ENCODE measurements at regions of chr14 and their contacts with region 1.

Region 1: DNA sequence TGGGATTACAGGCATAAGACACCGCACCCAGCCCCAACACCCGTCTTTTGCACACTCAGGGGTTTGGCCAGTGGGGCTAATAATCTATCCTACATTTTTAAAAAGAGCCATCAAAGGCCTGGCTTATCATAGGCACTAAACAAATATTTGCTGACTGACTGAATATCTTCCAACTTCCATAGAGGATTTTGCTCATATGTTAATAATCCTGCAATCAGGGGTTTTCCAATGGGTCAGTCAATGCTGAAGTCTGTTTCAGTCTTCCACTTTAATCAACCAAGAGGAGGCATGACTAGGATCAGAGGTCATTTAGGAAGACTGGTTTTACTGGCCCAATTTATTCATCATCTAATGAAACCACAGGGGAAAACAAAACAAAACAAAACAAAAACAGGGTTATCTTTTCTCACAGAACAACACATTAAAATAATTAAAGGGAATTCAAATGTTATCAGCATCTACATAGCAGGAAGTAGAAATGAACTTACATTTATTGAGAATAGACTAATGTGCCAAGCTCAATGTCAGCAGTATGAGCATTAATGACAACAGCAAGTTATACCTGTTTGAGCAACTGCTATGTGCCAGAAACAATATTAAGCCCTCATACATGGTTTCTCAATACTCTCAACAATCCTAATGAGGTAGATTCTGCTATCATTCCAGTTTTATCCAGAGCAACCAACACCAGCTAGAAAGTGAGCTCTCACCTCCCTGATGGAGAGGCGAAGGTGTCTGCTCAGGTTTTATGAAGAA is 372.2 kb downstream of the EGLN3 start:
- DNase-seq: no peak
- ATAC-seq: no peak
- H3K4me3 ChIP-seq: no peak overlapping the region
- H3K27ac ChIP-seq: no peak overlapping the region
- H3K4me1 ChIP-seq: no peaks in the 10 kb centered on the region
- H3K27me3 ChIP-seq: no peaks in the 10 kb centered on the region
- CTCF ChIP-seq: no peak
- EP300 ChIP-seq: no peak
- POLR2A ChIP-seq: no peak
- RAD21 ChIP-seq: no peak

Region 2: GRCh38 chr14:33516898-33517436 is 61.7 kb before region 1 on chr14:
- CTCF ChIA-PET with region 1: interaction called, 18 read pairs
- POLR2A ChIA-PET with region 1: no interaction called
- RAD21 ChIA-PET with region 1: interaction called, 83 read pairs
- SMC1A ChIA-PET with region 1: interaction called, 32 read pairs
- in situ Hi-C with region 1: no loop called
- intact Hi-C with region 1: no loop called
- DNase-seq: no peak
- ATAC-seq: peak; percentile 16; the same call in 1 of the 3 replicates
- H3K4me3 ChIP-seq: no peak overlapping the region
- H3K27ac ChIP-seq: no peak overlapping the region
- H3K4me1 ChIP-seq: no peaks in the 10 kb centered on the region
- H3K27me3 ChIP-seq: peaks cover 0 to 2% of the 10 kb centered on the region in 2 experiments; a peak in 2 of 4 replicates
- CTCF ChIP-seq: no peak
- EP300 ChIP-seq: no peak
- POLR2A ChIP-seq: no peak
- RAD21 ChIP-seq: no peak

Region 3: GRCh38 chr14:33564774-33565630 is 13.6 kb before region 1 on chr14:
- CTCF ChIA-PET with region 1: interaction called, 39 read pairs
- POLR2A ChIA-PET with region 1: interaction called, 48 read pairs
- RAD21 ChIA-PET with region 1: interaction called, 90 read pairs
- SMC1A ChIA-PET with region 1: interaction called, 98 read pairs
- in situ Hi-C with region 1: no loop called
- intact Hi-C with region 1: no loop called
- DNase-seq: peak; percentile 57
- ATAC-seq: peak; percentile 92
- H3K4me3 ChIP-seq: no peak overlapping the region
- H3K27ac ChIP-seq: no peak overlapping the region
- H3K4me1 ChIP-seq: no peaks in the 10 kb centered on the region
- H3K27me3 ChIP-seq: peaks cover 0 to 3% of the 10 kb centered on the region in 2 experiments; a peak in 1 of 4 replicates
- CTCF ChIP-seq: no peak
- EP300 ChIP-seq: peak in 1 of 2 experiments; percentile 70; a peak in 1 of 4 replicates
- POLR2A ChIP-seq: no peak
- RAD21 ChIP-seq: no peak

Region 4: GRCh38 chr14:33596211-33597080 is 17.8 kb after region 1 on chr14:
- CTCF ChIA-PET with region 1: interaction called, 12 read pairs
- POLR2A ChIA-PET with region 1: interaction called, 15 read pairs
- RAD21 ChIA-PET with region 1: interaction called, 44 read pairs
- SMC1A ChIA-PET with region 1: interaction called, 103 read pairs
- in situ Hi-C with region 1: no loop called
- intact Hi-C with region 1: no loop called
- DNase-seq: no peak
- ATAC-seq: no peak
- H3K4me3 ChIP-seq: no peak overlapping the region
- H3K27ac ChIP-seq: no peak overlapping the region
- H3K4me1 ChIP-seq: no peaks in the 10 kb centered on the region
- H3K27me3 ChIP-seq: no peaks in the 10 kb centered on the region; a peak in 1 of 4 replicates
- CTCF ChIP-seq: no peak
- EP300 ChIP-seq: no peak
- POLR2A ChIP-seq: no peak
- RAD21 ChIP-seq: no peak

Region 5: GRCh38 chr14:33611405-33612209 is 33.0 kb after region 1 on chr14:
- CTCF ChIA-PET with region 1: interaction called, 3 read pairs
- POLR2A ChIA-PET with region 1: interaction called, 5 read pairs
- RAD21 ChIA-PET with region 1: interaction called, 12 read pairs
- SMC1A ChIA-PET with region 1: interaction called, 32 read pairs
- in situ Hi-C with region 1: no loop called
- intact Hi-C with region 1: no loop called
- DNase-seq: no peak
- ATAC-seq: peak; percentile 29; the same call in 1 of the 3 replicates
- H3K4me3 ChIP-seq: no peak overlapping the region
- H3K27ac ChIP-seq: no peak overlapping the region
- H3K4me1 ChIP-seq: no peaks in the 10 kb centered on the region
- H3K27me3 ChIP-seq: no peaks in the 10 kb centered on the region
- CTCF ChIP-seq: no peak
- EP300 ChIP-seq: no peak
- POLR2A ChIP-seq: no peak
- RAD21 ChIP-seq: no peak

Region 6: DNA sequence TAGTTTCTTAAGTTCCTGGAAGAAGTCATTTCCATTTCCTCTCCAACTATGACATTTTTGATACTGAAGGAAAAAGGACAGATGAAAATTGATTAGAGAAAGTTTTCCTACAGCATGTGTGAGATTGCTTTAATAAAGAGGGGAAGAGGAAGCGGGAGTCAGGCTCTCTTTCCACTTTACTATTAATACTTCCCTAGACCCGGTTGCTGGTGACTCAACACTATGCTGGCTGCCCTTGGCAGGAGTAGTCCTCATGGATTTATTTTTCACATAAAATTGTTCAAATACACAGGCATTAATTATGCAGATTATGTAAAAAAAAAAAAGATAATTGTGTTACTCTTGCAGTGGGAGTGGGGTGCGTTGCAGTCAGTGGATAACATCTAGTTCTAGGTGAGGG is 78.8 kb after region 1 on chr14:
- CTCF ChIA-PET with region 1: interaction called, 5 read pairs
- POLR2A ChIA-PET with region 1: interaction called, 3 read pairs
- RAD21 ChIA-PET with region 1: interaction called, 5 read pairs
- SMC1A ChIA-PET with region 1: interaction called, 16 read pairs
- in situ Hi-C with region 1: no loop called
- intact Hi-C with region 1: no loop called
- DNase-seq: no peak
- ATAC-seq: no peak
- H3K4me3 ChIP-seq: no peak overlapping the region
- H3K27ac ChIP-seq: no peak overlapping the region
- H3K4me1 ChIP-seq: no peaks in the 10 kb centered on the region
- H3K27me3 ChIP-seq: no peaks in the 10 kb centered on the region
- CTCF ChIP-seq: no peak
- EP300 ChIP-seq: no peak
- POLR2A ChIP-seq: no peak
- RAD21 ChIP-seq: no peak